Activated naive CD4-positive, alpha-beta T cell treated with anti-CD3 and anti-CD28 coated beads, Interleukin-2, amount 10 ng/mL, durations not matched to agents 7 days and 5 days (primary cell): ENCODE measurements at regions of chr7 and their contacts with region 1.

Region 1: DNA sequence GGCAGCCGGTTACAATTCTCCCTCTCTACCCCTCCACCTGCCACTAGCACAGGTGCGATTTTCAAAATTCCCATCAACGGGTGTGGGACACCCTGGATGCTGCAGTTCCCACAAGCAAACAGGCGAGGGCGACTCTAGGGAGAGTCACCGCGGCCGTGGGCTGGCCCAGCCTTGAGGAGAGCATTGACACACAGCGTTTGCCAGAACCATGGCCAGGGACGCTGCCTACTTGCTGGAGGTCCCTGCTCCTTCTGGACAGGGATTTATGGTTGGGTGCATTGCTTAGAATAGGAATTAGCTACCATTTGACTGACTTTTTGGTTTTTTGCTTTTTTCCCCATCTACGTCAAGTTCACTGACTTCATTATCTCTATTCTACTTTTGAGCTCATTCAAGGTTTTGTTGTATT is 19.0 kb upstream of the CLDN4 start:
- DNase-seq: peak; percentile 69
- H3K4me3 Mint-ChIP-seq: no peak overlapping the region
- H3K27ac Mint-ChIP-seq: no peak overlapping the region
- H3K4me1 Mint-ChIP-seq: no peaks in the 10 kb centered on the region
- H3K27me3 Mint-ChIP-seq: peaks cover 22% of the 10 kb centered on the region

Region 2: GRCh38 chr7:73792594-73793292 is 19.0 kb before region 1 on chr7:
- CTCF ChIA-PET with region 1: no interaction called
- DNase-seq: no peak
- H3K4me3 Mint-ChIP-seq: no peak overlapping the region
- H3K27ac Mint-ChIP-seq: no peak overlapping the region
- H3K4me1 Mint-ChIP-seq: no peaks in the 10 kb centered on the region
- H3K27me3 Mint-ChIP-seq: peaks cover 9% of the 10 kb centered on the region

Region 3: DNA sequence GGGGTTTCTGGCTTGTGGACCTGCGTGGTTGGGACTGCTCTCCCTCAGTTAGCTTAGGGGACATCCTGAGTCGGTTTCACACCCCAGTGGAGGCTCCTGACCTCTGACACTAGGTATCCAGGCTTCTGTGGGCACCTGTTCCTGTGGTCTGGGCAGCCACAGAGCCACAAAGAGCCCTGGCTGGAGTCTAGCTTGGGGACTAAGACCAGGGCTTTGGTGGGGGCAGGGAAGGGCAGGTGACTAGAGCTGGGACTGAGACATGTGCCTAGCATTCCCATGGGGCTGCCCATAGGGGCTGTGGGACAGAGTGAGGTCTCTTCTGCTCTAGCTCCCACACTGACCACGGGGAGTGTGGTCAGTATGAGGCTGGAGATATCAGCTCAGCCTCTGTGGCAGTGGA is 45.2 kb after region 1 on chr7:
- CTCF ChIA-PET with region 1: interaction called, 36 read pairs
- DNase-seq: no peak
- H3K4me3 Mint-ChIP-seq: no peak overlapping the region
- H3K27ac Mint-ChIP-seq: peak overlapping the region; percentile 2
- H3K4me1 Mint-ChIP-seq: peaks cover 10% of the 10 kb centered on the region
- H3K27me3 Mint-ChIP-seq: peaks cover 62% of the 10 kb centered on the region